ENCODE measurements at regions of chr3 and their contacts with region 1.

Region 1: GRCh38 chr3:187164885-187165543 is 25.7 kb upstream of the RPL39L start:
- DNase-seq: peak; percentile 49
- CTCF ChIP-seq: peak; percentile 55

Region 2: GRCh38 chr3:186849374-186849975 is 315.5 kb before region 1 on chr3:
- in situ Hi-C with region 1: loop called (anchors 10 kb)
- DNase-seq: peak; percentile 78
- CTCF ChIP-seq: peak; percentile 58

Region 3: DNA sequence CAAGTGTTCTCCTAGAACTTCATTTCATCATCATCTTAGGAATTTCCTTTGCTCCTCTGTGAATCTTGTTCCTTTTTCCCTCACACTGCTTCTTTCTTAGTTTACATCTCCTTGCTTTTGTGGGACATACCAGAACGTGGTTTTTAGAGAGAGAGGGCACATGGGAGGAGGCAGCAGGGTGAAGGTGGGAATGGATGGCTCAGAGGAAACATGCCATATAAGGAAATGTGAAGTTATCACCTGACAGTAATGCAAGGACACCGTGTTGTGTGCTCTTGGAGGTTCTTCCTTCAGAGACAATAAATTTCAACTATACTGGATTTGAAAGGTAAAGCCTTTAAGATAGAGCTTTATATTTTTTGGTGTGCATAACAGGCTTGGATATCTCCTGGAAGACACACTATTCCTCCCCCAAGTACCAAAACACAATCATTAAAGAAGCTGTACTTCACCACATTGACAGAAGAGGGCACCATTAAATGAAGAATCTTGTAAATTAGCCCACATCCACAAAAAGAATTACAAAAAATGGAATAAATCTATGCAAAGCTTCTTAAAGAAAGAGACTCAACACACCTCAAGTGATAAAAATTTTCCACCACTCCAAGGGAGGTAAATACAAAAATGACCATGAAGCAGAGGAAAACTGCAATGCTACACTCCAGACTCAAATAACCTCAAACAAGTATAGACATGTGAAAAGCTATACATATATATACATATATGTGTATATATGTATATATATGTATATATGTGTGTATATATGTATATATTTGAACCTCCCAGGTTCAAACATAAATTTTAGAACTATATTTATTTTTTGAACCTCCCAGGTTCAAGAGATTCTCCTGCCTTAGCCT is 51.9 kb before region 1 on chr3:
- in situ Hi-C with region 1: loop called (anchors 10 kb)
- DNase-seq: no peak
- CTCF ChIP-seq: peak; percentile 65

Measured in GM13977 (cell line).